GM18951 (cell line): ENCODE measurements at regions of chr9 and their contacts with region 1.

Region 1: DNA sequence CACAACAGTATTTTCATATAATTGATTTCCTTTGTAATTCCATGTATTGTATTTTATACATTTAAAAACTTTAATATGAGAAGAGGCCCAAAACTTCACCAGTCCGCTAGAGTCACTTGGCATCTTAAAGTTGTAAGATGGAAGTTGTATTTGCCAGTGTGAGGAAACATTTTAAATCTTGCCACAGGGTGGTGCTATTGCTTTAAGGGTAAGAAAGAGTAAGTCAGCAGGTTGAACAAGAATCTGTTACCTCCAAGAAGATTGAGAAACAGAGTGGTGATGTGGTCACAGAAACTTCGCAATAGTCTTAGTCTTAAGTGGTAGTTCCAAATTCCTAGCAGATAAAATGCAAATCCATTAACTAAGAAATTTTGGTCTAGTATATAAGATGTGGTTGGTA is 39.8 kb upstream of the RANBP6 start:
- POLR2A ChIP-seq: no peak

Region 2: GRCh38 chr9:5402217-5402616 is 653.0 kb before region 1 on chr9:
- in situ Hi-C with region 1: no loop called
- POLR2A ChIP-seq: no peak

Region 3: GRCh38 chr9:6302436-6302835 is 247.2 kb after region 1 on chr9:
- in situ Hi-C with region 1: loop called (anchors 5 kb)
- POLR2A ChIP-seq: no peak